ENCODE measurements at regions of chr3 and their contacts with region 1.

Region 1: GRCh38 chr3:45816544-45816943 is 20.2 kb upstream of the SLC6A20 start:
- DNase-seq: no peak
- ATAC-seq: no peak
- H3K4me3 Mint-ChIP-seq: no peak overlapping the region
- H3K27ac Mint-ChIP-seq: no peak overlapping the region
- H3K4me1 Mint-ChIP-seq: peaks cover 5% of the 10 kb centered on the region
- H3K27me3 Mint-ChIP-seq: no peaks in the 10 kb centered on the region

Region 2: GRCh38 chr3:45647148-45647619 is 169.4 kb before region 1 on chr3:
- CTCF ChIA-PET with region 1: no interaction called
- POLR2A ChIA-PET with region 1: no interaction called
- intact Hi-C with region 1: no loop called
- DNase-seq: no peak
- ATAC-seq: no peak
- H3K4me3 Mint-ChIP-seq: no peak overlapping the region
- H3K27ac Mint-ChIP-seq: no peak overlapping the region
- H3K4me1 Mint-ChIP-seq: no peaks in the 10 kb centered on the region
- H3K27me3 Mint-ChIP-seq: no peaks in the 10 kb centered on the region

Region 3: DNA sequence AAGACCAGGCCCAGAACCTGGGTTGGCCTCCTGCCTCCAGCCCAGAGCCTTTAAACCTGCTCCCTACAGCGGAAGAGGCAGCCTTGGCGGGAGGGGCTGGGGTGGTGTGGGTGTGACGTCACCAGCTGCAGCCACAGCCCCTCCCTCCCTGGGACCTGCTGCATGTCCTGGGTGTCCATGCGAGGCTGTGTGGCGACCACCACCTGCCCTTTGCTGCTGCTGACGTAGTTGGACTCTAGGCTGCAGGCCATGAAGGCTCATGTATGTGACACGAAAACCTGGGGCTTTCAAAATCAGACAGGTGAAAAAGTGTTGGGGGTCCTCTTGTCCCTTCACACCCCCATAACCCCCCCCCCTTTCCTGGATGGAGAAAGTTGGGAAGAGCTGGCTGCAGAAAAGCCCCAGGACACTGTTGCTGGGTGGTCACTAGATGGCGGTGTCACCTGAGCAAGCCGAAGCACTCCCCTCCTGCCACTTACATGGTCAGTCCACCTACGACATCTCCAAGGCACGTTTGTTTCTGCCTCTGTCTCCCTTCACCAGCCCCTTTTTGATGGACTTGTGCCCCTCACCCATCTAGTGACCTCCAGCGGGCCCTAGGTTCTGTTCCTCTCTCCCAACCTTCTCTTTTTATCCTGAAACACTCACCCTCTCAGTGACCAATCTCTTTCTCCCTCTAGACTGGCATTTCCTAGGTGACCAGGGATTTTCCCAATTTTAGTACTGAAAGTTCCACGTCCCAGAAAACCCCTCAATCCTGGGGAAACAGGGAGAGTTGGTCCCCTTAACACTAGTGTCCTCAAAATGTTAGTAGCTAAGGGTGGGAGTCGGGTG is 55.4 kb before region 1 on chr3:
- CTCF ChIA-PET with region 1: no interaction called
- POLR2A ChIA-PET with region 1: no interaction called
- intact Hi-C with region 1: no loop called
- DNase-seq: peak; percentile 68
- ATAC-seq: peak; percentile 69
- H3K4me3 Mint-ChIP-seq: no peak overlapping the region
- H3K27ac Mint-ChIP-seq: no peak overlapping the region
- H3K4me1 Mint-ChIP-seq: no peaks in the 10 kb centered on the region
- H3K27me3 Mint-ChIP-seq: peaks cover 3% of the 10 kb centered on the region

Region 4: DNA sequence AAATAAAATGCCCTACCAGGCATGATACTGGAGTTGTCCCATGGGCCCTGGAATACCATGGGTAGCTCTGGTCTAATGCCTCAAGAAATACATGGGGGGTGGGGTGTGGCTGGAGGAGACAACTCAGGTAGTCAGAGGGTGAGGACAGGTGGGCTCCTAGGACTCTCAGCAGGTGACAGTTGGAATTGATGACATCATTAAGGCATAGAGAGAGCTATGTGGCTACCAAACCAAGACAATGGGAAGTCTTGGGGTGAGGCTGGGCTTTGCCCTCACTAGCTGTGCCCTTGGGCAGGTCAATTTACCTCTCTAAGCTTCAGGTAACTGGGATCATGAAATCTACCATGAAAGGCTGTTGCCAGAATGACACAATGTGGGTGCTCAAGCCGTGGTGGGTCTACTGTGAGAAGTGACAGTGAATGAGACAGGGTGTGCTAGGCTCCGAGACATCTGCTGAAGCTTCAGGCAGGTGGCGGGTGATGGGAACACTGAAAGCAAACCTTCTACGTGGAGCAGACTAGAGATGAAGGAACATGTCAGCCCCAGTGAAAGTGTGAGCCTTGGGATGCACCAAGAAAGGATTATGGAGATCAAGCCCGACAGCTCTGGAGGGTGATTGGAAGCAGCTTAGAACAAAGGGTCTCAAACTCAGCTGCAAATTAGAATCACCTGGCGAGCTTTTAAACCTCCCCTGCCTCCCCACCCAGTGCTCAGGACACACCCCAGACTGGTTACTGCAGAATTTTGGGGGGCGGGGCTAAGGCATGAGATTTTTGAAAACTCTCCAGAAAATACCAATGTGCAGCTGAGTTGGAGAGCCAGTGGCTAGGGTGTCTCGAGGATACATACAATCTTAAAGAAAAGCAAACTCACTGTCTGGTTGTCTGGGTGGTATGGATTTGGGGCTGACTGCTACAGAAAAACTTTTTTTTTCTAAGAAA is 41.7 kb before region 1 on chr3:
- CTCF ChIA-PET with region 1: no interaction called
- POLR2A ChIA-PET with region 1: interaction called, 10 read pairs
- intact Hi-C with region 1: no loop called
- DNase-seq: no peak
- ATAC-seq: no peak
- H3K4me3 Mint-ChIP-seq: no peak overlapping the region
- H3K27ac Mint-ChIP-seq: no peak overlapping the region
- H3K4me1 Mint-ChIP-seq: peaks cover 11% of the 10 kb centered on the region
- H3K27me3 Mint-ChIP-seq: peaks cover 7% of the 10 kb centered on the region

Region 5: DNA sequence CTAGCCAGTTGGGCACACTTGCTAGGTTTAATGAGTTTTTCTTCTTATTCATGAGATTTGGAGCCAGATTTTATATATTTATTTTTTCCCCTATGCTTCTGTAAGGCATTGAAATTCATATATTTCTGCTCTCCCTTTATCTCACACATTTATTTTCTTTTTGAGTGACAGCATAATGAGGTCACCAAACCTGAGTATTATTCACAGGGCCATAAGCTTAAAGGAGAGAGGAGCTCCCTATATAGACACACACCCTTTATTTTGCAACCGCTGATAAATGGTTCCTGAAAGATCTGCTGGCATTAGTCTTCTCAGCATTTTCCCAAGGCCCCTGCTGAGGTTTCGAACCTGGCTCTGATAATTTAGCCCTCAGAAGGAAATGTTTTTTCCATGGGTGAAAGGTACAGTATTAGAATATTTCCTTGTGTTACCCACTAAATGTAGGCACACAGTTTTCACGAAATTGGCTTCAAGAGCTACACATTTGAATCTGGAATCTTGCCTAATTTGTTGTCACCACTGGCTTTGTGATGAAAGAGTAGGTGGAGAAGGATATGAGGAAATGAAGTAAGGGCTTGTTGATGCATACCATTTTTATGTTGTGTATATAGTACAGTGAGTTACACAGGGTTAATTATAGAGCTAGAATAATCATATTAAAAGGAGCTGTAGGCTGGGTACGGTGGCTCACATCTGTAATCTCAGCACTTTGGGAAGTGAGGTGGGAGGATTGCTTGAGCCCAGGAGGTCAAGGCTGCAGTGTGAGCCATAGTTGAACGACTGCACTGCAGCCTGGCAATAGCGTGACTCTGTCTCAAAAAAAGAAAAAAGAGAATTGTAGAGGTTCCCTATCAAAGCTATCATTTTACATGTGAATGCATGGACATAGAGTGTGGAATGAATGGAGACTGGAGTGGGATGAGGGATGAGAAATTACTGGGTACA is 1472.7 kb after region 1 on chr3:
- CTCF ChIA-PET with region 1: no interaction called
- POLR2A ChIA-PET with region 1: no interaction called
- intact Hi-C with region 1: loop called in 1 of 2 experiments (anchors 5 kb)
- DNase-seq: no peak
- ATAC-seq: no peak
- H3K4me3 Mint-ChIP-seq: no peak overlapping the region
- H3K27ac Mint-ChIP-seq: no peak overlapping the region
- H3K4me1 Mint-ChIP-seq: peaks cover 31% of the 10 kb centered on the region
- H3K27me3 Mint-ChIP-seq: no peaks in the 10 kb centered on the region